ENCODE measurements at regions of chr15 and their contacts with region 1.

Region 1: DNA sequence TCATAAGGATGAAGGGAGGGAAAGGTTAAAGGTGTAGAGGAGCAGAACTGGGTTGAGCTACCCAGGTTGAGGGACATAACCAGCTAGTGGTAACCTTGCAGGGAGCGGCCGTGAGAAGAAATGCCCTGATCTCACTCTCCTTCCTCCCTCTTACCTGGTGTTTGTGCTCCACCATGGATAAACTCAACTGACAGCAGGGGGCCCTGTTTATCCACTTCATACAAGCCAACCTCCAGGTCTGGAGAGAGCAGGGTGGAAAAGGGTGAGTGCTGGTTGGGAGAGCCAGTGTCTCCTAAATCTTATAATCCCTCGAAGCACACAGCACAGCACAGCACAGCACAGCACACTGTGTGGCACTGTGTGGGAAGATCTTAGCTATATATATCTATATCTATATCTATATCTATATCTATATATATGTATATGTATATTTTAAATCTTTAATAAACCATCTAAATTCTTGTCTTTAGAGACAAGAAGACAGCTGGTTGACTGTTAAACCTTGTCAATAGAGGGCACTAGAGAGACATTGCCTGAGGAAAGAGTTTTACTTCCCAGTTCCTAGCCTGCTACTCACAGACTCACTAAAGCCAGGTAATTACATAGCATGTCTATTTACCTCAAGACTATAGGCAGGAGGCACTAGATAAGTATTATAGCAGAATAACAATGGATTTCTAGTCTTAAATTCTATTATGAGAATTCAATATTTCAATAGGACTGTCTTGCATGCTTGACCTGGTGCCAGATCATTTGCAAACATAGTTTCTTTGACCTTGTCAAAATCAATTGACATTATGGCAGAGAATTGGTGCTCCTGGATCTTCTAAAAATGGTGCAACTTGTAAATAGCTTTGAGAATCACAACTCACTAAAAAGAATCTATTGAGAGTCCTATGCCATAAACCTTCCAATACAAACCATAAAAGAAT is 21.7 kb upstream of the FMN1 start:
- DNase-seq: peak in 2 of 3 donors; percentile 50 to 64
- H3K4me3 ChIP-seq: no peak overlapping the region
- H3K27ac ChIP-seq: no peak overlapping the region
- H3K4me1 ChIP-seq: no peaks in the 10 kb centered on the region
- H3K27me3 ChIP-seq: no peaks in the 10 kb centered on the region

Region 2: GRCh38 chr15:32956006-32956405 is 260.2 kb before region 1 on chr15:
- CTCF ChIA-PET with region 1: no interaction called
- POLR2A ChIA-PET with region 1: no interaction called
- DNase-seq: peak; percentile 36 to 51 (median 48)
- H3K4me3 ChIP-seq: no peak overlapping the region
- H3K27ac ChIP-seq: no peak overlapping the region
- H3K4me1 ChIP-seq: peaks cover 0 to 4% (median 0%) of the 10 kb centered on the region in 4 experiments
- H3K27me3 ChIP-seq: no peaks in the 10 kb centered on the region

Region 3: DNA sequence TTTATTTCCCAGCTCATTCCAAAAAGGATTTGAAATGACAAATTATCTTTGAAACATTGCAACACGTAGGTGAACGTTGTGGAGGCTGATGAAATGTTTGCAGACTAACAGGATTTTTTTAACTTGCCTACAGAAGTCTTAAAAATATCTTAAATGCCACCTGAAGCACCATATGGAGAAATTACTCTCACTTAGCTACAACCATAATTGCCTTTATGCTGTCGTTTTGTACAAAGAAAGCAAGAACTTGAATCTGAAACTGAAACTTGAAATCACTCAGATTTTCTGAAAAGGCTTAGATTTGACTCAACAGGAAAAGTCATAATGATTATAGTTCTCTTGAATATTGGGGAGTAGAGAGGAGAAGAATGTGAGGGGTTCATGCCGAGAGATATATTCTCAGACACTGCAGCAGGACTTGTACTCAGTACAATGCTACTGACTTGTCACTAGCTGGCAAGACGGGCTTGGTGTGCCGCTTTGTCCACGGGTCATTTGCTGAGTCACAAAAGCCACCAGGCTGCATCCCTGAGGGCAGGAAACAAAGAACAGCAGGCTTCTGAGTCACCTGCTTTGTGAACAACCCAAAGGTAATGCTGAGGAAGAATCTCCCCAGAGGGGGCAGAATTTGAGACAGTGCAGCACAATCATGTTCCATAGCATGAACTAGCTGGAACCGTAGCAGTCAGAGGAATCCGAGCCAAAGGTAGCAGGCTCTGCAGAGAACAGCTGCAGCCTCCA is 14.5 kb before region 1 on chr15:
- CTCF ChIA-PET with region 1: interaction called, 16 read pairs
- POLR2A ChIA-PET with region 1: no interaction called
- DNase-seq: peak; percentile 74 to 94 (median 91)
- H3K4me3 ChIP-seq: peak overlapping the region in 6 of 7 experiments; percentile 24 to 76 (median 46)
- H3K27ac ChIP-seq: no peak overlapping the region
- H3K4me1 ChIP-seq: peaks cover 0 to 15% (median 4%) of the 10 kb centered on the region in 4 experiments
- H3K27me3 ChIP-seq: no peaks in the 10 kb centered on the region

Region 4: GRCh38 chr15:33226559-33227181 is 10.5 kb after region 1 on chr15:
- CTCF ChIA-PET with region 1: interaction called, 11 read pairs
- POLR2A ChIA-PET with region 1: interaction called, 4 read pairs
- DNase-seq: peak; percentile 92 to 96 (median 94)
- H3K4me3 ChIP-seq: no peak overlapping the region
- H3K27ac ChIP-seq: no peak overlapping the region
- H3K4me1 ChIP-seq: peaks cover 0 to 12% (median 7%) of the 10 kb centered on the region in 4 experiments
- H3K27me3 ChIP-seq: no peaks in the 10 kb centered on the region

Region 5: GRCh38 chr15:33309602-33310276 is 93.5 kb after region 1 on chr15:
- CTCF ChIA-PET with region 1: no interaction called
- POLR2A ChIA-PET with region 1: no interaction called
- DNase-seq: peak; percentile 66 to 75 (median 73)
- H3K4me3 ChIP-seq: peak overlapping the region in 4 of 7 experiments; percentile 8 to 72 (median 60)
- H3K27ac ChIP-seq: no peak overlapping the region
- H3K4me1 ChIP-seq: peaks cover 0 to 20% (median 12%) of the 10 kb centered on the region in 4 experiments
- H3K27me3 ChIP-seq: peaks cover 5 to 45% (median 25%) of the 10 kb centered on the region in 5 experiments

Region 6: GRCh38 chr15:33559207-33559890 is 343.1 kb after region 1 on chr15:
- CTCF ChIA-PET with region 1: no interaction called
- POLR2A ChIA-PET with region 1: no interaction called
- DNase-seq: no peak
- H3K4me3 ChIP-seq: no peak overlapping the region
- H3K27ac ChIP-seq: no peak overlapping the region
- H3K4me1 ChIP-seq: no peaks in the 10 kb centered on the region
- H3K27me3 ChIP-seq: no peaks in the 10 kb centered on the region